Mammary epithelial cell (primary cell): ENCODE measurements at regions of chr3 and their contacts with region 1.

Region 1: GRCh38 chr3:121995161-121996137 is 26.6 kb downstream of the ILDR1 start:
- DNase-seq: peak; percentile 93
- H3K4me3 ChIP-seq: no peak overlapping the region
- H3K27ac ChIP-seq: peak overlapping the region; percentile 55
- H3K4me1 ChIP-seq: peaks cover 27% of the 10 kb centered on the region
- H3K27me3 ChIP-seq: no peaks in the 10 kb centered on the region
- CTCF ChIP-seq: peak; percentile 69 to 73

Region 2: DNA sequence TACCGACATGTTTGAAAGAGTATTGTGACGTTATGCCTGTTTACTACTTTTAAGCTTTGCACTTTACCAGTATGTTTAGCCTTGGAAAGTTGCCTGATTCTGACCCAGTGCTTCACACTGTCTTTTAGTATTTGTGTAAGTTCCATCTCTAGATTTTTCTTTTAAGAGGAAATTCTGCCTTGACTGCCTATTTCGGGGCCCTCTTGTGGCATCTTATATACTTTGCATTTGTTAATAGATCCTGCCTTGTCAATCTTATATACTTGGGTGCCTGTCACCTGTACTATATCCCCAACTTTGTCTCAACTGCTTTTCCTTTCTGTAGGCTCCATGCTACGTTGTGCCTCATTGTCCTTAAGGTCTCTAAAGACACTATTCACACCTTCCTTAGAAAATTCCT is 842.9 kb before region 1 on chr3:
- CTCF ChIA-PET with region 1: no interaction called
- dilution Hi-C with region 1: no loop called
- in situ Hi-C with region 1: no loop called
- intact Hi-C with region 1: no loop called
- DNase-seq: peak; percentile 4
- H3K4me3 ChIP-seq: no peak overlapping the region
- H3K27ac ChIP-seq: no peak overlapping the region
- H3K4me1 ChIP-seq: no peaks in the 10 kb centered on the region
- H3K27me3 ChIP-seq: no peaks in the 10 kb centered on the region
- CTCF ChIP-seq: peak in 1 of 2 donors; percentile 43

Region 3: GRCh38 chr3:121834696-121835464 is 160.6 kb before region 1 on chr3 and contains the starts of genes EAF2 and IQCB1:
- CTCF ChIA-PET with region 1: no interaction called
- dilution Hi-C with region 1: no loop called
- in situ Hi-C with region 1: no loop called
- intact Hi-C with region 1: loop called (anchors 5 kb)
- DNase-seq: peak; percentile 95
- H3K4me3 ChIP-seq: peak within 1 kb of the TSS; percentile 68 to 85 (median 82)
- H3K27ac ChIP-seq: peak within 1 kb of the TSS; percentile 83
- H3K4me1 ChIP-seq: peaks cover 13% of the 10 kb centered on the region
- H3K27me3 ChIP-seq: no peaks in the 10 kb centered on the region
- CTCF ChIP-seq: no peak
- total RNA-seq, gene EAF2: 4.2 to 4.7 TPM
- total RNA-seq, gene IQCB1: 21.1 to 23.3 TPM

Region 4: DNA sequence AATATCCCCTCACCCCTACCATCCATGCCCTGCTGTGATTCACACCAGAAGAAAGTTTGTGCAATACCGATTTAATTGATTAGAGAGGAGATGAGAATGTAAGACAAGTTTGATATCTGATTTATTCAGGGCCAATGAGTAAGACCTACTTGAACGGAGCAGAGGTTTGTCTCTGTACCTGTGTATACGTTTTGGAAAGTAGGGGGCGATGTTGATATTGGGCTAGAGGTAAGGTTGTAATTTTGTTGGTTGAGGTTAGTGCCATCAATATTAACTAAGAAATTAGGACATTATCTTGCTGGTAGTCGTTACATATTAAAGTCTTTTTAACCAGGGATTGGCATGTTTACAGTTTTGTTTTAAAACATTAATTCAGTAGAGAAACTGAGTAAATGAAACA is 139.9 kb before region 1 on chr3:
- CTCF ChIA-PET with region 1: no interaction called
- dilution Hi-C with region 1: no loop called
- in situ Hi-C with region 1: no loop called
- intact Hi-C with region 1: loop called (anchors 1 kb)
- DNase-seq: peak; percentile 31
- H3K4me3 ChIP-seq: no peak overlapping the region
- H3K27ac ChIP-seq: no peak overlapping the region
- H3K4me1 ChIP-seq: peaks cover 8% of the 10 kb centered on the region
- H3K27me3 ChIP-seq: no peaks in the 10 kb centered on the region
- CTCF ChIP-seq: peak; percentile 44 to 65

Region 5: DNA sequence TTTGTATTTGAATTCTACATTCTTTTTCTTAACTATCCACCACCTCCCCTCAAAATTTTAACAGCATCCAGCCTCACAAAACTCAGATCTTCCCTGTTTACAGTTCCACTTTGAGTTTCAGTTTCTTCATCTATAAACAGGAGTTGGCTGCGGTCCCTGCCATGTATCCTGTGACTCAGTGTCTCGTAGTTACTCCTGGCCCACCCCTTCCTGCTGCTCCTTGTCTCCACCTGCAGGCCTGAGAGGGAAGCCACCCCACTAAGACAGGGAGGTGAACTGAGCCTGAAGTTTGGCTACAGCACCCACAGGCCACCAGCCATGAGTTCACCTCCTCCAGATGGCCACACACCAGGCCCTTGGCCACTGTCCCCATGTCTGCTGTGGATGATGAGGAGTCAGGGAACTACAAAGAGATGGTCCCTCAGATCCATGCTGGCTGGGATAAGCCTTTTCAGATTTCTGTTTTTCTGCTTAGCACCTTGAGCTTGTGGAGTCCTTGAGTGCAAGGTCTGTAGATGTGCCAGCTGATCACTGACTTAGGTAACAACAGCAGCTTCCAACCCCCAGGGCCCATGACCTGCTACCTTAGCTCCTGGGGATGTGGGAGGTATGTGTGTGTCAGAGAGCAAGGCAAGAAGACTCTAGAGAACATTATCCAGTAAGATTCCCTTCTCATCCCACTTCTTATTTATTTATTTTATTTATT is 97.2 kb after region 1 on chr3:
- CTCF ChIA-PET with region 1: no interaction called
- dilution Hi-C with region 1: no loop called
- in situ Hi-C with region 1: no loop called
- intact Hi-C with region 1: loop called (anchors 5 kb)
- DNase-seq: peak; percentile 37
- H3K4me3 ChIP-seq: no peak overlapping the region
- H3K27ac ChIP-seq: no peak overlapping the region
- H3K4me1 ChIP-seq: no peaks in the 10 kb centered on the region
- H3K27me3 ChIP-seq: no peaks in the 10 kb centered on the region
- CTCF ChIP-seq: peak; percentile 62 to 76

Region 6: GRCh38 chr3:122356415-122356814 is 361.0 kb after region 1 on chr3:
- CTCF ChIA-PET with region 1: no interaction called
- dilution Hi-C with region 1: no loop called
- in situ Hi-C with region 1: no loop called
- intact Hi-C with region 1: loop called (anchors 10 kb)
- DNase-seq: peak; percentile 72
- H3K4me3 ChIP-seq: no peak overlapping the region
- H3K27ac ChIP-seq: no peak overlapping the region
- H3K4me1 ChIP-seq: peaks cover 21% of the 10 kb centered on the region
- H3K27me3 ChIP-seq: no peaks in the 10 kb centered on the region
- CTCF ChIP-seq: peak; percentile 68 to 84